ENCODE measurements at regions of chr5 and their contacts with region 1.

Region 1: DNA sequence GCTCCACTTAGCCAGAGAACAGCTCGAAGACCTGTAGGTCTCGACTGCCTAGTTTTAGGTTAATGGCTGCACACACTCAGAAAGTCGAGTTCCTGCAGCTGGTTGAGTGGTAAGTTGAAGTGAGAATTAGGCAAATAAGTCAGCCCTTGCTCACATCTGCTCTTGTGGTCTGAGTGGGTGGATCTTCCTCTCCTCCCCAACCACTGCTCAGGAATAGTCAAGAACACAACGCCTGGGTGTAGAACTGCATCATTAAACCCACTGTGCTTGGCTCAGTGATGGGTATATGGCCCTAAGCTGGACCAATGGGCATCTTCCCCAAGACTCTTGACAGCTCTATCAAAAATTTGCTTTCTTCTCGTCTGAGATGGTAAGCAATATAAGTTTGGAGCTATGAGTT is 20.9 kb upstream of the ADAM19 start:
- DNase-seq: no peak
- ATAC-seq: peak; percentile 72
- H3K4me3 Mint-ChIP-seq: peak overlapping the region; percentile 42
- H3K27ac Mint-ChIP-seq: peak overlapping the region; percentile 93
- H3K4me1 Mint-ChIP-seq: peaks cover 97% of the 10 kb centered on the region
- H3K27me3 Mint-ChIP-seq: no peaks in the 10 kb centered on the region
- CTCF ChIP-seq: no peak

Region 2: DNA sequence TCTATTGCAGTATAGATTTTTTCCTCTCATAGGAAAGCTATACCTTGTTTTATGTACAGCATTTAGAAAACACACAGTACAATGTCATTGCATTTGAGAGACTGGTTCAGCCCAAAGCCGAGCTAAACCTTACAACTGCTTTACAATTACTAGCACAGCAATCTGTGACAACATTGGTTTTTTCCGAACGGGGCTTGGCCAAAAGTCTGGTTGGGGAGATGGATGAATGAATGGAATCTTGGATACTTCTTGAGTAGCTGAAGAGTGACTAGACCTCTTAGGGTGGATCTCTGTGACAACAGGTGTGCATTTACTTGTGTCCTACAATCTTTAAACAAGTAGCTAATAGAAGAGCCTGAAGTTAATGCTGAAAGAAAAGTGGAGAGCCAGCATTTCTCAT is 1268.3 kb before region 1 on chr5:
- CTCF ChIA-PET with region 1: no interaction called
- POLR2A ChIA-PET with region 1: no interaction called
- intact Hi-C with region 1: no loop called
- DNase-seq: no peak
- ATAC-seq: no peak
- H3K4me3 Mint-ChIP-seq: no peak overlapping the region
- H3K27ac Mint-ChIP-seq: no peak overlapping the region
- H3K4me1 Mint-ChIP-seq: no peaks in the 10 kb centered on the region
- H3K27me3 Mint-ChIP-seq: no peaks in the 10 kb centered on the region
- CTCF ChIP-seq: no peak

Region 3: GRCh38 chr5:156534906-156535485 is 1061.5 kb before region 1 on chr5:
- CTCF ChIA-PET with region 1: no interaction called
- POLR2A ChIA-PET with region 1: no interaction called
- intact Hi-C with region 1: no loop called
- DNase-seq: no peak
- ATAC-seq: no peak
- H3K4me3 Mint-ChIP-seq: no peak overlapping the region
- H3K27ac Mint-ChIP-seq: no peak overlapping the region
- H3K4me1 Mint-ChIP-seq: no peaks in the 10 kb centered on the region
- H3K27me3 Mint-ChIP-seq: no peaks in the 10 kb centered on the region
- CTCF ChIP-seq: no peak

Region 4: DNA sequence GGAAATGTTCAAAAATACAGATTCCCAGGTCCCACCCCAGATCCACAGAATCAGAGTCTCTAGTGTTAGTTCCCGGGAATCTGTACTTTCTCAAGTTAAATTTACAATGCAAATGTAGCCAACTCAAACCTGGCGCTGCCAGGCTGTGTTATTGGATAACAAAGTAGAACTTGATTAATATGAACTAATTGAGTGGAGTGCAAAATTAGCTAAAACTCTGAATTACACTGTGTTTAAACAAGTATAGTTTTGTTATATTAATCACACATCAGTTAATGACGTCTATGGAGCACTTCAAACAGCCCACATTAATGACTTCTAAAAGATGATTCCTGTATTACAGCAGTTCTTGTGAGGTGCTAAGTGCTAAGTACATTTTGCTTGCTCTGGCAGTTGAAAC is 363.0 kb before region 1 on chr5:
- CTCF ChIA-PET with region 1: no interaction called
- POLR2A ChIA-PET with region 1: no interaction called
- intact Hi-C with region 1: no loop called
- DNase-seq: no peak
- ATAC-seq: no peak
- H3K4me3 Mint-ChIP-seq: no peak overlapping the region
- H3K27ac Mint-ChIP-seq: no peak overlapping the region
- H3K4me1 Mint-ChIP-seq: no peaks in the 10 kb centered on the region
- H3K27me3 Mint-ChIP-seq: no peaks in the 10 kb centered on the region
- CTCF ChIP-seq: no peak

Region 5: GRCh38 chr5:157486221-157486681 is 110.2 kb before region 1 on chr5:
- CTCF ChIA-PET with region 1: interaction called, 3 read pairs
- POLR2A ChIA-PET with region 1: interaction called, 27 read pairs
- intact Hi-C with region 1: loop called (anchors 2 kb)
- DNase-seq: no peak
- ATAC-seq: peak; percentile 33
- H3K4me3 Mint-ChIP-seq: peak overlapping the region; percentile 56
- H3K27ac Mint-ChIP-seq: peak overlapping the region; percentile 95
- H3K4me1 Mint-ChIP-seq: peaks cover 86% of the 10 kb centered on the region
- H3K27me3 Mint-ChIP-seq: no peaks in the 10 kb centered on the region
- CTCF ChIP-seq: no peak

Region 6: DNA sequence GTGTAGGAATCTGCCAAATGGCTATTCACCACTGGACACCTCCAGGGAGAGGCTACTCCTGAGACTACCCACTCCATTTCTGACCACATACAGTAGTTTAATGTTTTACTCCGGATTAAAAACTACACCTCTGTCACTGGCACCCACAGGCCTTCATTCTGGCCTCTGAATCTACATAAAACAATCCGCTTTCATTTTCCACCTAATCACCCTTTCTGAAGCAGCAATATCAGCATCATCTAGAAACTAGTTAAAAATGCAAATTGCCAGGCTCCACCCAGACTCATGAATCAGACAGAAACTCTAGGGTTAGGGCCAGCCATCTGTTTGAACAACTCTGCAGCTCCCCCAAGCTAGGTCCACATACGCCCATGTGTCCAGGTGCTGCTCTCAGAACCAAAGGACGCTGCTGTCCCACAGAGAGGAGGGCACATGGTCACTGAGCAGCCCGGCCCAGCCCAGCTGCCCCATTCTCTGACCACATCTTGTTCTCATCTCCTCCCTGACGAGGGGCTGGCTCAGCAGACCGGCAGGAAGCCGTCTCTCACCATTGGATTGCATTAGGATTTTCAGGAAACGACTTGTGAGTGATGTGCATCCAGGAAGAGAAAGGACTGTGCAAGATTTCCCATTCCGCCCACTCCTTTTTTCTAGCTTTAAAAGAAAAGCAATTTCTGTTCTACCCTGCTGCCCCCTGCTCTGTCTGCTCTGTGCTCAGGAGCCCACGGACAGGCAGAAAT is 55.6 kb before region 1 on chr5:
- CTCF ChIA-PET with region 1: interaction called, 4 read pairs
- POLR2A ChIA-PET with region 1: interaction called, 11 read pairs
- intact Hi-C with region 1: loop called (anchors 1 kb)
- DNase-seq: peak; percentile 37
- ATAC-seq: peak; percentile 91
- H3K4me3 Mint-ChIP-seq: peak overlapping the region; percentile 60
- H3K27ac Mint-ChIP-seq: peak overlapping the region; percentile 92
- H3K4me1 Mint-ChIP-seq: peaks cover 86% of the 10 kb centered on the region
- H3K27me3 Mint-ChIP-seq: no peaks in the 10 kb centered on the region
- CTCF ChIP-seq: no peak

Region 7: GRCh38 chr5:157582731-157583620 is 13.5 kb before region 1 on chr5:
- CTCF ChIA-PET with region 1: interaction called, 4 read pairs
- POLR2A ChIA-PET with region 1: interaction called, 206 read pairs
- intact Hi-C with region 1: loop called (anchors 1 kb)
- DNase-seq: no peak
- ATAC-seq: peak; percentile 56
- H3K4me3 Mint-ChIP-seq: peak overlapping the region; percentile 1
- H3K27ac Mint-ChIP-seq: peak overlapping the region; percentile 62
- H3K4me1 Mint-ChIP-seq: peaks cover 54% of the 10 kb centered on the region
- H3K27me3 Mint-ChIP-seq: no peaks in the 10 kb centered on the region
- CTCF ChIP-seq: no peak

Region 8: DNA sequence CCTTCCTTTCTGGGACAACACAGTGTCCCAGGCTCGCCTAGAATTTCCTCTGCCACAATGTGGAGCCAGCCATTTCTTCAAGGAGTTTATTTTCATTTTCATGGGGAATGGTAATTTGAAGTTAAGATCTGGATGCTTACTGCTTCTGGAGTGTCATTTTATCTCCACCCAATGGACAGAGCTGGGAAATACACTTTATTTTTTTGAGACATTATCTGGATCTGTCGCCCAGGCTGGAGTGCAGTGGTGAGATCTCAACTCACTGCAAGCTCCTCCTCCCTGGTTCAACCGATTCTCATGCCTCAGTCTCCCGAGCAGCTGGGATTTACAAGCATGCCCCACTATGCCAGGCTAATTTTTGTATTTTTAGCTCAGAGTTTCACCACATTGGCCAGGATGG is 122.0 kb after region 1 on chr5:
- CTCF ChIA-PET with region 1: interaction called, 15 read pairs
- POLR2A ChIA-PET with region 1: interaction called, 3 read pairs
- intact Hi-C with region 1: loop called (anchors 5 kb)
- DNase-seq: no peak
- ATAC-seq: peak; percentile 95
- H3K4me3 Mint-ChIP-seq: no peak overlapping the region
- H3K27ac Mint-ChIP-seq: peak overlapping the region; percentile 41
- H3K4me1 Mint-ChIP-seq: peaks cover 18% of the 10 kb centered on the region
- H3K27me3 Mint-ChIP-seq: no peaks in the 10 kb centered on the region
- CTCF ChIP-seq: no peak